T-cell (primary cell): ENCODE measurements at regions of chr7 and their contacts with region 1.

Region 1: DNA sequence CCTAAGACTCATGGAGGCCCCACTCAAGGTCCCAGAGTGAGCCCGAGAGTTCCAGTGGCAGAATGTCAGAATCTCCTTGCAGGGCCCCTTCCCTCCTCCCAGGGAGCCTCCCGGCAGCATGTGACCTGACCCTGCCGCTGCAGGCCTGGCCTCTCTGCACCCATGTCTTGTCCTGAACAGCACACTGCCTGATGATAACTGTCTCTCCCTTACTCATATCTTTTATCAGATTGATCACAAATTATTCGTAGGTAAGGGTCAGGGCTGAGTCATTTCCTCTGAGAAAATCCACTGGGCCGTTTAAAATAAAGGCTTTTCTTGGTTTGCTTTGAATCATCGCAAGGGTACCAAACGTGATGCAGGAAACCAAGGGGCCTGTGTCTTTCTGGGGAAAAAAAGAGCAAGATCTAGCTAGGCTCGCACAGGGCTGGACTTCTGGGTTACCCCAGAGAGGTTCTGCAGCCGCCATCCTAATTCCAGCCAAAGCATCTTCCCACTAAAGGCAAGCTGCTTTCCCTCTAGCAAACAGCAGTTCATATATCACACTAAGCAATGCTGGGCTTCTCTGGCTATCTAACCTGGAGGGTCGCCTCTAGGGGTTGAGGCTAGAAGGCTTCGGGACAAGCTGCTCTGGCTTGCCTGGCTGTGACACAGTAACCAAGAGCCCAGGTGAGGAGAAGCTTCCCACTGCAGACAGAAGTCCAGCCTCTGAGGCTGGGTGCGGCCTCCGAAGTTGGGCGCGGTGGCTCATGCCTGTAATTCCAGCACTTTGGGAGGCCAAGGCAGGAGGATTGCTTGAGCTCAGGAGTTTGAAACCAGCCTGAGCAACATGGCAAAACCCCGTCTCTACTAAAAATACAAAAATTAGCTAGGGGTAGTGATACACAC is 104.9 kb downstream of the SPDYE5 start:
- DNase-seq: no peak
- ATAC-seq: no peak
- H3K4me3 ChIP-seq: no peak overlapping the region
- H3K4me3 Mint-ChIP-seq: no peak overlapping the region
- H3K27ac ChIP-seq: no peak overlapping the region
- H3K27ac Mint-ChIP-seq: no peak overlapping the region
- H3K4me1 ChIP-seq: peaks cover 0 to 5% of the 10 kb centered on the region in 2 experiments
- H3K4me1 Mint-ChIP-seq: peaks cover 0 to 9% (median 2%) of the 10 kb centered on the region in 3 donors
- H3K27me3 ChIP-seq: no peaks in the 10 kb centered on the region
- H3K27me3 Mint-ChIP-seq: no peaks in the 10 kb centered on the region

Region 2: DNA sequence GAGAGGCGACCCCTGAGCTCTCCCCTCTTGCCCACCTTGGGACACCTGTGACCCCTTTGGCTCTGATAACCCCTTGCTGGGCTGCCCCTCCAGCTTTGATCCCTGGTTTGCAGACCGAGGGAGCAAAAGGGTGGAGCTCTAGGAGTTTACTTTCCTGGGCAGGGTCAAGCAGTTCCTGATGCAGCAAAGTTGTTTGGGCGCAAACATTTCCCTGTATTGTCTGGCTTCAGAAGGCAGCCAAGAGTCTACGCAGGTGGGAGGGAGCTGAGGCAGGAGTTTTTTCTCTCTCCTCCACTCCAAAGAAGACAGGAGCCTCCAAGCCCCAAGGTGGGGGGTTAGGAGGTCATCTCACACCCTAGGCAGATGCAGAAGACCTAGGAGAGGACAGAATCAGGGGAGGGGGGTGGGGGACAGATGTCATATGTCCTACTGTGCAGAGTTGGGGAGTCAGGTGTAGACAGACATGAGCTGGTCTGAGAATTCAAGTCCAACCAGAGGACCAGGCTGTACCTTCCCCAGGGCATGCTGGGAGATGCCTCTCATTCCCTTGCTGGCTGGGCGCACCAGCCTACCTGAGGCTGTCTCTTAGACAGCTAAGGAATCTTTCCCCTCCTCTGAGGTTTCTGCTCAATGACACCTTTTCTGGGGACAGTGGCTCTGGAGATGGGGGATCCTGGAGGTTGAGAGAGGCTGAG is 1715.5 kb before region 1 on chr7:
- CTCF ChIA-PET with region 1: interaction called in 1 of 2 experiments, 12 read pairs
- POLR2A ChIA-PET with region 1: no interaction called
- DNase-seq: no peak
- ATAC-seq: no peak
- H3K4me3 ChIP-seq: no peak overlapping the region
- H3K4me3 Mint-ChIP-seq: no peak overlapping the region
- H3K27ac ChIP-seq: no peak overlapping the region
- H3K27ac Mint-ChIP-seq: no peak overlapping the region
- H3K4me1 ChIP-seq: no peaks in the 10 kb centered on the region
- H3K4me1 Mint-ChIP-seq: no peaks in the 10 kb centered on the region
- H3K27me3 ChIP-seq: peaks cover 0 to 39% of the 10 kb centered on the region in 2 experiments
- H3K27me3 Mint-ChIP-seq: peaks cover 14 to 27% of the 10 kb centered on the region in 2 donors